Sigmoid colon (tissue), 7 donors: ENCODE measurements at regions of chr3 and their contacts with region 1.

Region 1: DNA sequence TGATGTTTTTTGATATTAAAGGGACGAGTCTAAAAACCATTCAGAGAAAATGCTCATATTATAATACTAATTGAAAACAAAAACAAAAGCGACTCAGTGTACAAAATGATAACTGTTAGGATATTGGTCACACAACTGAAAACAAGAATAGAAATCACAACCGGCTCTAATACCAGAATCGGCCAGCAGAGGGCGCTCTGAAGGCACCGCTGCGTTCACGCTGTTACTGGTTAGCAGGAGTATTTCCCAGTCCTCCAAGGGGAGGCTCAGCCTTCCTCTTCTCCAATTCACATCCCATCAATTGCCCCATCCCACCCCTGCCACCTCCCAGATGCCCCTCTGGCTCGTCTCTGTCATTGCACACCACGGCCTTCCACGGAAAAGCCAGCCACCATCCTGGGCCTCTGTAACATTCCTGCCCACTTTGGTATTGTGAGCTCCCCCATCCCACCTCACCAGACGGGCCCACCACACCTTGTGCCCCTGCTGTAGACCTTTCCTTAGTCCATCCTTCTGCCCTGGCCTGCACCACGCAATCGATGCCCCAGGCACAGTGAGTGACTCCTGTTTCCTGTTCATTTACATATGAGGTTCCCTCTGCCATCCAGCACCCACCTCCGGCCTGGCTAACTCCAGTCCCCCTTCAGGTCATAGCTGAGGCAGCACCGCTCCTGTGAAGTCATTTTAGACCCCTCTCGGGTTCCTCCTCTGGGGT is 8.5 kb downstream of the FAM107A start:
- DNase-seq: peak; percentile 85
- H3K4me3 ChIP-seq: no peak overlapping the region
- H3K27ac ChIP-seq: no peak overlapping the region
- H3K4me1 ChIP-seq: peaks cover 0 to 9% (median 0%) of the 10 kb centered on the region in 4 donors
- H3K27me3 ChIP-seq: no peaks in the 10 kb centered on the region
- CTCF ChIP-seq: peak; percentile 65 to 94 (median 89)
- EP300 ChIP-seq: no peak
- POLR2A ChIP-seq: no peak

Region 2: DNA sequence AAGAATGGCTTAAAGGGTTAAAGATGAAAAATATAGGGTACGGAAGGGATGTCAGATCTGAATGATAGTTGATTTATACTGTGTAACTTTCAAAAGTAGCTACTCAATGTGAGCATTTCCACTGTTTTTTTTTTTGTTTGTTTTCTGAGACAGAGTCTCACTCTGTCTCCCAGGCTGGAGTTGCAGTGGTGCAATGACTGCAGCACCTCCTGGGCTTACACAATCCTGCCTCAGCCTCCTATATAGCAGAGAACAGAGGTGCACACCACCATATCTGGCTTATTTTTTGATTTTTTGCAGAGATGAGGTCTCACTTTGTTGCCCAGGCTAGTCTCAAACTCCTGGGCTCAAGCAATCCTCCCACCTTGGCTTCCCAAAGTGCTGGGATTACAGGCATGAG is 245.9 kb before region 1 on chr3:
- intact Hi-C with region 1: no loop called
- DNase-seq: no peak
- H3K4me3 ChIP-seq: no peak overlapping the region
- H3K27ac ChIP-seq: no peak overlapping the region
- H3K4me1 ChIP-seq: peaks cover 0 to 14% (median 11%) of the 10 kb centered on the region in 4 donors
- H3K27me3 ChIP-seq: no peaks in the 10 kb centered on the region
- CTCF ChIP-seq: no peak
- EP300 ChIP-seq: no peak
- POLR2A ChIP-seq: no peak

Region 3: DNA sequence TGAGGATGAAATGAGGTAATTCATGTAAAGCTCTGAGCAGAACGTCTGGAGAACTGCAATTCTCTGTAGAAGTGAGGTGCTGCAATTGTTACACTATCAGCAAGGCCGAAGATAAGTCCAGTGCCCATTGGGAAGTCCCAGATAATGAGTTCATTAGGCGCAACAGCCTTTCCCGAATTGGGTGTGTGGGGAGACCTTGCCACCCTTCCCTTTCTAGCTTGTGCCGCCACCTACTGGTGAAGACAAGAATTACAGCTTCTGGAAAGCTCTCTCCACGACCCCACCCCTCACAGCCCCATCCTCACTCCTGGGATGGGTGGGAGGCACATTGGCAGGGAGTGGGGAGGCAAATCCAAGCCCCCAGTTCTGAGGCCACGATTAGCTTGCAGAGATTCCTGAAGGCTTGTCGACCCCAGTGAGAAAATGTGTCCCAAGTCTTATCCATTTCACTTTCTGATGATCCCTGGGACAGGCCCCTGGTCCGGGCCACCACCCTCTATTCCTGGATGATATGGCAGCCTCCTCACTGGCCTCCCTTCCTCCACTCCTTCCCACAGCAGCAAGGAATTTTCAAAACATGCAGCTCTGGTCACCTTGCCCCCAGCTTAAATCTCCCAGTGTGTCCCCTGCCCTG is 61.5 kb after region 1 on chr3:
- intact Hi-C with region 1: loop called (anchors 1 kb)
- DNase-seq: peak; percentile 75
- H3K4me3 ChIP-seq: no peak overlapping the region
- H3K27ac ChIP-seq: peak overlapping the region; percentile 38 to 72 (median 54)
- H3K4me1 ChIP-seq: peaks cover 0 to 24% (median 21%) of the 10 kb centered on the region in 4 donors
- H3K27me3 ChIP-seq: no peaks in the 10 kb centered on the region
- CTCF ChIP-seq: peak; percentile 71 to 98 (median 94)
- EP300 ChIP-seq: no peak
- POLR2A ChIP-seq: no peak